Activated CD4-positive, alpha-beta memory T cell treated with anti-CD3 and anti-CD28 coated beads for 36 hours (primary cell): ENCODE measurements at regions of chr9 and their contacts with region 1.

Region 1: DNA sequence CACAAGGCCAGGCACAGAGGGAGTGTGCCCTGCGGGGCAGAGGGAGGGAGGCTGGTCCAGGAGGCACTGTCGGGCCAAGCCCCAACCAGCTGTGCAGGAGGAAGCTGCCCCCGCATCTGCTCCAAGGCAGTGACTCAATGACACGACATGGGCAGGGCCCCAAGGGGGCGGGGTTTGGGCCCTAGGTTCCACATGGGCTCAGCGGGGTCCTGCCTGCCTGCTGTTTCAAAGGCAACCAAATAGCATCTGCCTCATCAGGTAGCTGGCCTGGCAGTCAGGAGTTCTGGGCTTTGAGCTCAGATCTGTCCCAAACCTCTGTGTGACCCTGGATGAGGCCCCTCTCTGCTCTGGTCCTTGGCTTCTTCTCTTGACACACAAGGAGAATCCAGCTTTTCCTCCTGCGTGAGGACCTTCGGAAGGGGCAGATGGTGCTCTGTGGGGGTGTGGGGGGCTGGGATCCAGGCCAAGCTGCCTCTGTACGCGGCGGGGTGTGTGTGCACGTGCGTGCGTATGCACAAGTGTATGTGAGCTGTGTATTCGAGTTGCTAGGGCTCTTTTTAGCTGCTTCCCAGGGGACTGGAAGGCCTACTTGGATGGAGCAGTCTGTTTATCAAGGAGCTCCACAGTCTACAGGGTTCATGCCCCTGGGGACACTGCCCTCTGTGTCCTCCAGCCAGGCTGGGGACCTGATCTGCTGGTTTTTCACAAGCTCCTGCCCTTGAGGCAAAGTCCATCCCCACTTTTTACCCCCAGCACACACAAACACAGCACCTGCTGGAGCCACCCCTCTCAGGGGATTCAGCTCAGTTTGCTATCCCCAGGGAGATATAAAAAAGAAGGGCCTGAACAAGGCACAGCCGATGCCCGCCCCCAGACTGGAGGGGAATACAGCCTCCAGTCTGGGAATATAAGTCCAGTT is 138.9 kb downstream of the RGS3 start:
- DNase-seq: peak; percentile 91
- H3K4me3 Mint-ChIP-seq: no peak overlapping the region
- H3K27ac Mint-ChIP-seq: no peak overlapping the region
- H3K4me1 Mint-ChIP-seq: peaks cover 19% of the 10 kb centered on the region
- H3K27me3 Mint-ChIP-seq: no peaks in the 10 kb centered on the region

Region 2: GRCh38 chr9:113446323-113446740 is 156.1 kb before region 1 on chr9:
- CTCF ChIA-PET with region 1: interaction called, 10 read pairs
- POLR2A ChIA-PET with region 1: no interaction called
- intact Hi-C with region 1: no loop called
- DNase-seq: no peak
- H3K4me3 Mint-ChIP-seq: no peak overlapping the region
- H3K27ac Mint-ChIP-seq: peak overlapping the region; percentile 55
- H3K4me1 Mint-ChIP-seq: no peaks in the 10 kb centered on the region
- H3K27me3 Mint-ChIP-seq: no peaks in the 10 kb centered on the region

Region 3: GRCh38 chr9:113614843-113615648 is 12.7 kb after region 1 on chr9:
- CTCF ChIA-PET with region 1: no interaction called
- POLR2A ChIA-PET with region 1: no interaction called
- intact Hi-C with region 1: loop called (anchors 1 kb)
- DNase-seq: peak; percentile 65
- H3K4me3 Mint-ChIP-seq: peak overlapping the region; percentile 40
- H3K27ac Mint-ChIP-seq: peak overlapping the region; percentile 83
- H3K4me1 Mint-ChIP-seq: peaks cover 47% of the 10 kb centered on the region
- H3K27me3 Mint-ChIP-seq: no peaks in the 10 kb centered on the region

Region 4: GRCh38 chr9:113622600-113623400 is 20.4 kb after region 1 on chr9:
- CTCF ChIA-PET with region 1: no interaction called
- POLR2A ChIA-PET with region 1: interaction called, 10 read pairs
- intact Hi-C with region 1: loop called (anchors 1 kb)
- DNase-seq: peak; percentile 92
- H3K4me3 Mint-ChIP-seq: peak overlapping the region; percentile 63
- H3K27ac Mint-ChIP-seq: peak overlapping the region; percentile 99
- H3K4me1 Mint-ChIP-seq: peaks cover 54% of the 10 kb centered on the region
- H3K27me3 Mint-ChIP-seq: no peaks in the 10 kb centered on the region